ENCODE measurements at regions of chr2 and their contacts with region 1.

Region 1: DNA sequence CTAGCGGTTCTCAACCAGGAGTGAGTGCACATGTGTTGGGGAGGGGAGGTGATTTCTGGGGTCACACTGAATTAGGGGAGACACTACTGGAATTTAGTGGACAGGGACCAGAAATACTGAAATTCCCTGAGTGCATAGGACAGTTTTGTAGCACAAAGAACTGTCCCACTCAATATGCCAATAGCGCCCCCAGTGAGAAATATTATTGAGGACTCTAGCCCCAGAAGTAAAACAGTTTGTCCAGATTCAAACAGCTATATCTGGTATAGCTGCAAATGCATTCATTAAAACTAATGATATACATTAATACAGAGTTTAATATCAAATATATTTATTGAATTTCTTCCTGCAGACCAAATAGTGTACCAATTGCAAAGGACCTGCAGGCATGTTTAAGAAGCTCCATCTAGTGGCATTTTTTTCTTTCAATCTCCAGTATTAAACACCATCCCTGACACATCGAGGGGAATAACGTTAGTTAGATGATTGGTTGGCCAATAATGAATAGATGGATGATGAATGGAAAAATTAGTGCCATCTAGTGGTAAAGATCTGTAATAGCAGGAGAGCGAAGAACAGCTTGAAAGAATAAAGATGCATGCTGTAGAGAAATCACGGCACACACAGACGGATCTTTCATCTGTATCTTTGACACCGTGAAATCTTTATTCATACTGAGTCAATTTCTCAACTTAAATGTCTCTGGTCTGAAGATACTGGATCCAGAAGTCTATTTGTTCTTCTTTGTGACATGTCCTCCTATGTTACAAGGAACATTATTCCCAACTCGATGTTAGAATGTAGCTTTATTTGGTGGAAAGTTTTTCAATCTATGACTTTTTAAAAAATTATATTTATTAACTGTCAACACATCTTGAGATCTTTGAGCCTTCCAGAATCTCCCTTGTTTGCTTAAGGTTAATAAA is 62.5 kb downstream of the DHRS9 start:
- DNase-seq: no peak
- ATAC-seq: peak; percentile 97
- H3K4me3 Mint-ChIP-seq: no peak overlapping the region
- H3K27ac Mint-ChIP-seq: no peak overlapping the region
- H3K4me1 Mint-ChIP-seq: no peaks in the 10 kb centered on the region
- H3K27me3 Mint-ChIP-seq: peaks cover 2% of the 10 kb centered on the region

Region 2: GRCh38 chr2:169119126-169119770 is 12.6 kb before region 1 on chr2:
- CTCF ChIA-PET with region 1: interaction called, 45 read pairs
- POLR2A ChIA-PET with region 1: no interaction called
- intact Hi-C with region 1: no loop called
- DNase-seq: no peak
- ATAC-seq: no peak
- H3K4me3 Mint-ChIP-seq: no peak overlapping the region
- H3K27ac Mint-ChIP-seq: no peak overlapping the region
- H3K4me1 Mint-ChIP-seq: no peaks in the 10 kb centered on the region
- H3K27me3 Mint-ChIP-seq: peaks cover 10% of the 10 kb centered on the region